ENCODE measurements at regions of chr3 and their contacts with region 1.

Region 1: DNA sequence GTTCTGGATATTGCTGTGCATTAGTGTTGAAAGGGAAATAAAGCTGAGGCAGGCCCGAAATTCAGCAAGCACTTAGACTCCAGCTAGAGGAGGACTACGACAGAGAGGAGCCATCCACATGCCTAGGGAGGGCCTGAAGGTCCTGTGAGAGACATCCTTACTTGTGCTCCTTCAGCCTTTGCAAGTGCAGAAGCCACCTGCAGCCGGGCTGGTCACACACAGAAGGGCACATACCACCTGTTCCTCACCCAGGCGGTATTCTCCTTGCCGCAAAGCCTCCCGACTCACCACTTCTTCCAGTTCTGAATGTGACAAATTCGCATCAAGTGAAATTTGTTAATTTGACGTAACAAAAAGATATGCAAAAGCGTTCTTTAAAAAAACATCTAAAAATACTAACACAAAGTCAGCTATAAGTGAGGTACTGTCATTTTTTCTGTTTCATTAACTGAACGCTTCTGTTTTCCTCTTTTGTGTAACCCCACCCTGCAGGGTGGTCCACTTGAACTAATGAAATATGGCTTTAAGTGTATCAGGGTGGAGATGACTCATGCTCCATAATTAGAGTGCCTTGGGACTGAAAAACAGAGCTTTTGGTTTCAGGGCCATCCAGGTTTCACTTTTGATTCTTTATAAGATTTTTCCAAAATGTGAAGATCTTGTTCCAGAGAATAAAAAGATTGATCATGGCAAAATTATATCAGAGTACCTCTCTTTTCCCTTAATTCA is 467.9 kb upstream of the ATP11B start:
- DNase-seq: peak; percentile 92
- H3K4me3 ChIP-seq: peak overlapping the region; percentile 40
- H3K27ac ChIP-seq: peak overlapping the region; percentile 84
- H3K4me1 ChIP-seq: peaks cover 69% of the 10 kb centered on the region
- CTCF ChIP-seq: no peak

Region 2: DNA sequence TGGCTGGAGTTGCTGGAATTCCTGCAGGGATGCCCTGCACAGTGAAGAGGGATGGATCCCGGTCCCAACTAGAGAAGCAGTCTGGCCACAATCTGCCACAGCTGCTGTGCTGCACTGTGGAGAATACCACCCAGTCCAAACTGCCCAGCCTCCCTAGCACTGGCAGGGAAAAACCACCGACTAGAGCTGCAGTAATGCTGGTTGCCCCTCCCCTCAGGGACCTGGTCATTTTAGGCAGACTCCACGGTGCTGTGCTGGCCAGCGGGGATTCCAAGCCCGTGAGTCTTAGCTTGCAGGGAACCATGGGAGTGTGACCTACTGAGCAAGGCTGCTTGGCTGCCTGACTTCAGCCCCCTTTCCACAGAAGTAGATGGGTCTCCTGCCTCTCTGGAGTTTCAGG is 10.1 kb before region 1 on chr3:
- CTCF ChIA-PET with region 1: no interaction called
- POLR2A ChIA-PET with region 1: interaction called, 15 read pairs
- intact Hi-C with region 1: no loop called
- DNase-seq: no peak
- H3K4me3 ChIP-seq: no peak overlapping the region
- H3K27ac ChIP-seq: no peak overlapping the region
- H3K4me1 ChIP-seq: no peaks in the 10 kb centered on the region
- CTCF ChIP-seq: no peak

Region 3: DNA sequence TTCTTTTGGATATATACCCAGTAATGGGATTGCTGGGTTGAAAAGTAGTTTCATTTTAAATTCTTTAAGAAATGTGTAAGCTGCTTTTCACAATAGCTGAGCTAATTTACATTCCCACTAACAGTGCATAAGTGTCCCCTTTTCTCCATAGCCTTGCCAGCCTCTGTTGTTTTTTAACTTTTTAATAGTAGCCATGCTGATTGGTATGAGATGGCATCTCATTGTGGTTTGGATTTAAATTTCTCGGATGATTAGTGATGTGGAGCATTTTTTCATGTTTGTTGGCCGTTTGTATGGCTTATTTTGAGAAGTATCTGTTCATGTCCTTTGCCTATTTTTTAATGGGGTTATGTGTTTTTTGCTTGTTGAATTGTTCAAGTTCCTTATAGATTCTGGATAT is 23.7 kb after region 1 on chr3:
- CTCF ChIA-PET with region 1: no interaction called
- POLR2A ChIA-PET with region 1: interaction called, 32 read pairs
- intact Hi-C with region 1: no loop called
- DNase-seq: peak; percentile 70
- H3K4me3 ChIP-seq: peak overlapping the region; percentile 47
- H3K27ac ChIP-seq: peak overlapping the region; percentile 94
- H3K4me1 ChIP-seq: peaks cover 66% of the 10 kb centered on the region
- CTCF ChIP-seq: no peak

Region 4: DNA sequence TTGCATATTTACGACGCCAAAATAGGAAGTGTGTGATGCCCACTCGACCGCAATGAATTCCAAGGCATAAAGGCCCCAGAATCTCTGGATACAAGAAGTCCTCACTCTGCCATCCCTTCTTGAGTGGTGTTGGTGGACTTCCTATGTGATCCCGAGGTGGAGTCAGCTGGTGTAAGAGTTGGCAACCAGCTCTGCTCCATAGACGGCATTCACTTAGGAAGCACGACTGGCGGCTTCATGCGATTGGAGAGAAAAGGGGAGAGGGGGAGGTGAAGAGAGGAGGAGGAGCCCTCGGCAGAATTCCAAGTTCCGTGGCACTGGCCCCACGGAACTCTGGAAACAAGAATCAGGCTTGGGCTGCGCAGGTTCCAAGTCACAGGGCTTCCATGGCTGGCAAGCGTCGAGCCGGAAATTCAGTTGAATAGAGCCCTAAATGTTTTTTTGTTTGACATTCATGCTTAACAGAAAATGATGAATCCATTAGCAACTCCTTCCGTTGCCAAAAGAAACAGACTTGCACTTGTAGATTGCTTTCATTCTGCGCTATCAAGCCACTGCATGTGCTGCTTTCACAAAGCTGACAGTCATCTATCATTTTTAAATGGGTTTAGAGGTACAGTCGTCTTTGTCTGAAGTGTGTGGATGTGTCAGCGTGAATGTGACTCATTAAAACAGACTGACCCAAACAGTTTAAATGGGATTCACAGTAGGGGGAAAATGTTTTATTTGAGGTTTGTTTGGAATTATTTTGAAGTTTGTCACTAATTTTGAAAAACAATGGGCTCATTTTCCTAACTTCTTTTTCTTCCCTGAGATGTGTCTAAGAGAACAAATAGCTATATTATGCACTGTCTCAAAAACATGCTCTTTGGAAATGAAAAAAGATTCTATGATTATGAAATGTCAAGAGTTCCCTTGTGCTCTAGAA is 39.6 kb after region 1 on chr3:
- CTCF ChIA-PET with region 1: no interaction called
- POLR2A ChIA-PET with region 1: interaction called, 10 read pairs
- intact Hi-C with region 1: no loop called
- DNase-seq: no peak
- H3K4me3 ChIP-seq: no peak overlapping the region
- H3K27ac ChIP-seq: no peak overlapping the region
- H3K4me1 ChIP-seq: peaks cover 6% of the 10 kb centered on the region
- CTCF ChIP-seq: no peak